ENCODE measurements at regions of chr16 and their contacts with region 1.

Region 1: DNA sequence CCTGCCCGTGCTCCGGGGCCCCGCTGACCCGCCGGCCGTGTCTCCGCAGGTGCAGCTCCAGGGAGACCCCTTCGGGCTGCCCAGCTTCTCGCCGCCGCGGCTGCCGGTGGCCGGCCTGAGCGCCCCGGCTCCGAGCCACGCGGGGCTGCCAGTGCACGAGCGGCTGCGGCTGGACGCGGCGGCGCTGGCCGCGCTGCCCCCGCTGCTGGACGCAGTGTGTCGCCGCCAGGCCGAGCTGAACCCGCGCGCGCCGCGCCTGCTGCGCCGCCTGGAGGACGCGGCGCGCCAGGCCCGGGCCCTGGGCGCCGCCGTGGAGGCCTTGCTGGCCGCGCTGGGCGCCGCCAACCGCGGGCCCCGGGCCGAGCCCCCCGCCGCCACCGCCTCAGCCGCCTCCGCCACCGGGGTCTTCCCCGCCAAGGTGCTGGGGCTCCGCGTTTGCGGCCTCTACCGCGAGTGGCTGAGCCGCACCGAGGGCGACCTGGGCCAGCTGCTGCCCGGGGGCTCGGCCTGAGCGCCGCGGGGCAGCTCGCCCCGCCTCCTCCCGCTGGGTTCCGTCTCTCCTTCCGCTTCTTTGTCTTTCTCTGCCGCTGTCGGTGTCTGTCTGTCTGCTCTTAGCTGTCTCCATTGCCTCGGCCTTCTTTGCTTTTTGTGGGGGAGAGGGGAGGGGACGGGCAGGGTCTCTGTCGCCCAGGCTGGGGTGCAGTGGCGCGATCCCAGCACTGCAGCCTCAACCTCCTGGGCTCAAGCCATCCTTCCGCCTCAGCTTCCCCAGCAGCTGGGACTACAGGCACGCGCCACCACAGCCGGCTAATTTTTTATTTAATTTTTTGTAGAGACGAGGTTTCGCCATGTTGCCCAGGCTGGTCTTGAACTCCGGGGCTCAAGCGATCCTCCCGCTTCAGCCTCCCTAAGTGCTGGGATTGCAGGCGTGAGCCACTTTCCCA is 5.9 kb downstream of the CTF1 start:
- DNase-seq: no peak
- ATAC-seq: peak; percentile 98
- H3K4me3 ChIP-seq: peak overlapping the region; percentile 37 to 51
- H3K27ac ChIP-seq: peak overlapping the region; percentile 77
- H3K4me1 ChIP-seq: 0 out of 2 replicates have a peak, but pooled peaks cover 3% of the 10 kb centered on the region
- H3K27me3 ChIP-seq: no peaks in the 10 kb centered on the region
- CTCF ChIP-seq: peak; percentile 94; the same call in 1 of the 2 replicates

Region 2: GRCh38 chr16:30844671-30845449 is 57.4 kb before region 1 on chr16:
- CTCF ChIA-PET with region 1: interaction called, 19 read pairs
- POLR2A ChIA-PET with region 1: no interaction called
- in situ Hi-C with region 1: no loop called
- intact Hi-C with region 1: loop called (anchors 10 kb)
- DNase-seq: peak; percentile 55
- ATAC-seq: peak; percentile 96
- H3K4me3 ChIP-seq: peak overlapping the region in 1 of 2 experiments; percentile 31; a peak in 2 of 4 replicates
- H3K27ac ChIP-seq: 0 out of 2 replicates have a peak overlapping the region, but pooled peaks have one; percentile 36
- H3K4me1 ChIP-seq: no peaks in the 10 kb centered on the region; the same call in 1 of the 2 replicates
- H3K27me3 ChIP-seq: no peaks in the 10 kb centered on the region
- CTCF ChIP-seq: peak; percentile 94

Region 3: DNA sequence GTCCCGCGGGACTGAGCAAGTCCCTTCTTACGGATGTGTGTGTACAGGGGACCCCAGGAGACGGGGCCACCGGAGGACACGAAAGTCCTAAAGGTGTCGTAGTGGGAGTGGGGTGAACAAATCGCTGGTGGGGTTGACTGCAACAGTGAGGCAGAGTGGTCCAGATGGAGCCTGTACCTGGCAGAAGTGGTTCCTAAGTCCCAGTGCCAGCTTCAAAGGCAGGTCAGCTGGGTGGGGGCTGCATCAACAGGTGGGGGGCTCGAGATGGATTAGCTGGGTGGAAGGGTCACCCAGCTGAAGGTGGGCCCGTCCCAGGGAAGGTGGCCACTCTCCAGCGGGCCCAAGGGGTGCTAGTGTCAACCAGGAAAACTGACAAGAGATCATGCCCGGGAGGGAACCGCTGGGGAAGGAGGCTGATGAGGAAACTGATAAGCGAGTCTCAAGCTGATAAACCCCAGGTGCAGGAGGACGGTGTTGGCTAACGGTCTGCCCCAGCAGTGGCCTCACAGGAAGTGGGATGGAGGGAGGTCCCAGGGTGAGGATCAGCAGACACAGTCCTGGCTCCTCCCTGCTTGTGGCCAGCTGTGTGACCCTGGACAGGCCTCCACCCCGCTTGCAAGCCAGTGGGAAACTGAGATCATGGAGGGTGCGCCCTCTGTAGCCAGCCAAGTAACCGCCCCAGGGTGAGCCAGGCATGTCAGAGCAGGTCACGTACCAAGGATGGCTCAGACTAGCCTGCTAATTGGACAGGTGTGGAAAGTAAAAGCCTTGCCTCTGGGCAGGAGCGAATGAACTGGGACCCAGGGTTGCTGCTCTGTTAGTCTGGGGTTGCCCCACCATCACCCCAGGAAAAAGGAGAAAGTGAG is 47.6 kb after region 1 on chr16:
- CTCF ChIA-PET with region 1: interaction called, 17 read pairs
- POLR2A ChIA-PET with region 1: no interaction called
- in situ Hi-C with region 1: no loop called
- intact Hi-C with region 1: no loop called
- DNase-seq: no peak
- ATAC-seq: peak; percentile 41
- H3K4me3 ChIP-seq: peak overlapping the region; percentile 82 to 92
- H3K27ac ChIP-seq: peak overlapping the region; percentile 95
- H3K4me1 ChIP-seq: peaks cover 43% of the 10 kb centered on the region
- H3K27me3 ChIP-seq: no peaks in the 10 kb centered on the region
- CTCF ChIP-seq: no peak; the same call in 1 of the 2 replicates

Measured in Panc1 (cell line).